ENCODE measurements at regions of chr4 and their contacts with region 1.

Region 1: GRCh38 chr4:153344131-153345010 is at the start of gene MND1:
- DNase-seq: peak; percentile 82 to 97 (median 92)
- ATAC-seq: peak; percentile 97
- H3K4me3 ChIP-seq: peak within 1 kb of the TSS; percentile 58
- H3K4me3 Mint-ChIP-seq: peak within 1 kb of the TSS; percentile 89 to 97 (median 94)
- H3K27ac ChIP-seq: peak within 1 kb of the TSS; percentile 60
- H3K27ac Mint-ChIP-seq: peak within 1 kb of the TSS; percentile 26 to 90 (median 76)
- H3K4me1 ChIP-seq: peaks cover 0 to 8% of the 10 kb centered on the region in 2 donors
- H3K4me1 Mint-ChIP-seq: peaks cover 4 to 43% (median 27%) of the 10 kb centered on the region in 7 donors
- H3K27me3 ChIP-seq: no peaks in the 10 kb centered on the region
- H3K27me3 Mint-ChIP-seq: peaks cover 0 to 23% (median 6%) of the 10 kb centered on the region in 5 donors
- total RNA-seq, gene MND1: 13.5 TPM in 1 of 5 experiments, not detected in the others

Region 2: GRCh38 chr4:152352622-152353116 is 991.7 kb before region 1 on chr4:
- CTCF ChIA-PET with region 1: no interaction called
- POLR2A ChIA-PET with region 1: no interaction called
- intact Hi-C with region 1: no loop called
- DNase-seq: peak in 6 of 9 donors; percentile 3 to 40 (median 32)
- ATAC-seq: peak; percentile 68
- H3K4me3 ChIP-seq: no peak overlapping the region
- H3K4me3 Mint-ChIP-seq: peak overlapping the region in 9 of 10 donors; percentile 9 to 68 (median 46)
- H3K27ac ChIP-seq: no peak overlapping the region
- H3K27ac Mint-ChIP-seq: peak overlapping the region in 2 of 9 donors; percentile 66 to 67
- H3K4me1 ChIP-seq: peaks cover 0 to 8% of the 10 kb centered on the region in 2 donors
- H3K4me1 Mint-ChIP-seq: peaks cover 11 to 39% (median 22%) of the 10 kb centered on the region in 7 donors
- H3K27me3 ChIP-seq: no peaks in the 10 kb centered on the region
- H3K27me3 Mint-ChIP-seq: no peaks in the 10 kb centered on the region

Region 3: DNA sequence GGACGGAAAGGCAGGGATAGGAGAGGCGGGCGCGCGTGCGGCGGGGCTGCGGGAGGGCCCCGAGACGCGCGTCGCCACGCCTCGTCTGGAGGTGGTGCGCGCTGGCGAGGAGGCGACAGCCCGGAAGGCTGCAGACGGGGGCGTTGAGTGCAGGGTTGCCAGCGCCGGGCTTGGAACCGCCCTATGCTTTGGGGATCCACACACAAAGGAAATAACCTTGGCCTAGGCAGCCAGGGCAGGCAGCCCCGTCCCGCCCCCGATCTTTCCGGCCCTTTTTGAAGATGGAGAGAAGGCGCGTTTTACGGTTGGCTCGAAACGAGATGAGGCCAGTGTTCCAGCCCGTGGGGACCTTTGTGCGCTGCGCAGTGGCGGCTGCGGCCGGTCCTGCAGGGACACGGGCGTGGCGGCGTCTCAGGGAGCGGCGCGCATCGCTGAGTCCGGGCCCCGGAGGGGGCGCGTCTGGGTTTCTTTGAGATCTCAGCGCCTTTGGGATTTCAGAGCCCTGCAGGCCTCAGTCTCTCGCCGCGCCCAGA is 191.0 kb before region 1 on chr4:
- CTCF ChIA-PET with region 1: no interaction called
- POLR2A ChIA-PET with region 1: interaction called, 3 read pairs
- intact Hi-C with region 1: loop called in 1 of 2 experiments (anchors 2 kb)
- DNase-seq: peak; percentile 53 to 84 (median 78)
- ATAC-seq: peak; percentile 95
- H3K4me3 ChIP-seq: peak overlapping the region; percentile 81
- H3K4me3 Mint-ChIP-seq: peak overlapping the region; percentile 91 to 96 (median 92)
- H3K27ac ChIP-seq: peak overlapping the region; percentile 69
- H3K27ac Mint-ChIP-seq: peak overlapping the region; percentile 78 to 90 (median 85)
- H3K4me1 ChIP-seq: peaks cover 3 to 12% of the 10 kb centered on the region in 2 donors
- H3K4me1 Mint-ChIP-seq: peaks cover 23 to 42% (median 38%) of the 10 kb centered on the region in 7 donors
- H3K27me3 ChIP-seq: no peaks in the 10 kb centered on the region
- H3K27me3 Mint-ChIP-seq: peaks cover 0 to 43% (median 0%) of the 10 kb centered on the region in 5 donors

Region 4: GRCh38 chr4:153438916-153439756 is 94.8 kb after region 1 on chr4:
- CTCF ChIA-PET with region 1: interaction called, 15 read pairs
- POLR2A ChIA-PET with region 1: no interaction called
- intact Hi-C with region 1: loop called in 1 of 2 experiments (anchors 1 kb)
- DNase-seq: peak in 7 of 9 donors; percentile 33 to 60 (median 53)
- ATAC-seq: peak; percentile 86
- H3K4me3 ChIP-seq: peak overlapping the region; percentile 71
- H3K4me3 Mint-ChIP-seq: peak overlapping the region; percentile 76 to 98 (median 90)
- H3K27ac ChIP-seq: peak overlapping the region; percentile 81
- H3K27ac Mint-ChIP-seq: peak overlapping the region; percentile 78 to 98 (median 93)
- H3K4me1 ChIP-seq: peaks cover 8 to 20% of the 10 kb centered on the region in 2 donors
- H3K4me1 Mint-ChIP-seq: peaks cover 20 to 69% (median 58%) of the 10 kb centered on the region in 7 donors
- H3K27me3 ChIP-seq: no peaks in the 10 kb centered on the region
- H3K27me3 Mint-ChIP-seq: peaks cover 0 to 2% (median 0%) of the 10 kb centered on the region in 5 donors

Region 5: GRCh38 chr4:153521999-153522801 is 177.8 kb after region 1 on chr4:
- CTCF ChIA-PET with region 1: no interaction called
- POLR2A ChIA-PET with region 1: no interaction called
- intact Hi-C with region 1: loop called (anchors 1 to 2 kb)
- DNase-seq: peak in 8 of 9 donors; percentile 52 to 82 (median 78)
- ATAC-seq: peak; percentile 73
- H3K4me3 ChIP-seq: peak overlapping the region; percentile 50
- H3K4me3 Mint-ChIP-seq: peak overlapping the region; percentile 80 to 90 (median 84)
- H3K27ac ChIP-seq: peak overlapping the region; percentile 68
- H3K27ac Mint-ChIP-seq: peak overlapping the region; percentile 88 to 96 (median 93)
- H3K4me1 ChIP-seq: peaks cover 75 to 87% of the 10 kb centered on the region in 2 donors
- H3K4me1 Mint-ChIP-seq: peaks cover 85 to 99% (median 98%) of the 10 kb centered on the region in 7 donors
- H3K27me3 ChIP-seq: no peaks in the 10 kb centered on the region
- H3K27me3 Mint-ChIP-seq: no peaks in the 10 kb centered on the region

Region 6: GRCh38 chr4:153634738-153635353 is 290.5 kb after region 1 on chr4:
- CTCF ChIA-PET with region 1: no interaction called
- POLR2A ChIA-PET with region 1: no interaction called
- intact Hi-C with region 1: loop called in 1 of 2 experiments (anchors 2 kb)
- DNase-seq: peak in 4 of 9 donors; percentile 22 to 37 (median 30)
- ATAC-seq: peak; percentile 79
- H3K4me3 ChIP-seq: no peak overlapping the region
- H3K4me3 Mint-ChIP-seq: no peak overlapping the region
- H3K27ac ChIP-seq: no peak overlapping the region
- H3K27ac Mint-ChIP-seq: peak overlapping the region in 6 of 9 donors; percentile 2 to 67 (median 44)
- H3K4me1 ChIP-seq: no peaks in the 10 kb centered on the region
- H3K4me1 Mint-ChIP-seq: peaks cover 0 to 6% (median 0%) of the 10 kb centered on the region in 7 donors
- H3K27me3 ChIP-seq: no peaks in the 10 kb centered on the region
- H3K27me3 Mint-ChIP-seq: no peaks in the 10 kb centered on the region

Region 7: DNA sequence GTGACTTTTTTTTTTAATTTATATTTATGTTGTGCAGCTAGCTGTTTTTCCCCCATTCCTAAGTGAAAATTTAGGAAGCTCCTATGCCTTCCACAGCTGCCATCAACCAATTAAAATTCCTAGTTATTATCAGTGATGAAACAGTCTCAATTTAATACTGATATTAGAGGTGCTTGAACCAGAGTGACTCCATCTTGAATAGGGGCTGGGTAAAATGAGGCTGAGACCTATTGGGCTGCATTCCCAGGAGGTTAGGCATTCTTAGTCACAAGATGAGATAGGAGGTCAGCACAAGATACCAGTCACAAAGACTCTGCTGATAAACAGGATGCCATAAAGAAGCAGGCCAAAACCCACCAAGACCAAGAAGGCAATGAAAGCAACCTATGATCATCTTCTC is 1010.5 kb after region 1 on chr4:
- CTCF ChIA-PET with region 1: no interaction called
- POLR2A ChIA-PET with region 1: no interaction called
- intact Hi-C with region 1: loop called in 1 of 2 experiments (anchors 5 kb)
- DNase-seq: no peak
- ATAC-seq: no peak
- H3K4me3 ChIP-seq: no peak overlapping the region
- H3K4me3 Mint-ChIP-seq: no peak overlapping the region
- H3K27ac ChIP-seq: no peak overlapping the region
- H3K27ac Mint-ChIP-seq: no peak overlapping the region
- H3K4me1 ChIP-seq: no peaks in the 10 kb centered on the region
- H3K4me1 Mint-ChIP-seq: no peaks in the 10 kb centered on the region
- H3K27me3 ChIP-seq: no peaks in the 10 kb centered on the region
- H3K27me3 Mint-ChIP-seq: peaks cover 5 to 39% (median 12%) of the 10 kb centered on the region in 5 donors